ENCODE measurements at regions of chr7 and their contacts with region 1.

Region 1: GRCh38 chr7:117715784-117716445 is 157.3 kb downstream of the CTTNBP2 start:
- DNase-seq: peak; percentile 75
- ATAC-seq: peak; percentile 94
- H3K4me3 ChIP-seq: no peak overlapping the region
- H3K27ac ChIP-seq: no peak overlapping the region
- H3K4me1 ChIP-seq: no peaks in the 10 kb centered on the region
- H3K27me3 ChIP-seq: no peaks in the 10 kb centered on the region
- CTCF ChIP-seq: peak; percentile 76
- POLR2A ChIP-seq: no peak
- RAD21 ChIP-seq: peak; percentile 91

Region 2: GRCh38 chr7:117127585-117128168 is 588.2 kb before region 1 on chr7:
- CTCF ChIA-PET with region 1: no interaction called
- POLR2A ChIA-PET with region 1: no interaction called
- dilution Hi-C with region 1: no loop called
- in situ Hi-C with region 1: no loop called
- intact Hi-C with region 1: loop called (anchors 5 kb)
- DNase-seq: peak; percentile 72
- ATAC-seq: no peak
- H3K4me3 ChIP-seq: no peak overlapping the region
- H3K27ac ChIP-seq: no peak overlapping the region
- H3K4me1 ChIP-seq: peaks cover 12% of the 10 kb centered on the region
- H3K27me3 ChIP-seq: no peaks in the 10 kb centered on the region
- CTCF ChIP-seq: peak; percentile 75
- POLR2A ChIP-seq: no peak
- RAD21 ChIP-seq: peak; percentile 59

Region 3: GRCh38 chr7:117312598-117313580 is 403.0 kb before region 1 on chr7:
- CTCF ChIA-PET with region 1: no interaction called
- POLR2A ChIA-PET with region 1: no interaction called
- dilution Hi-C with region 1: no loop called
- in situ Hi-C with region 1: no loop called
- intact Hi-C with region 1: loop called (anchors 10 kb)
- DNase-seq: peak; percentile 13
- ATAC-seq: peak; percentile 72
- H3K4me3 ChIP-seq: no peak overlapping the region
- H3K27ac ChIP-seq: peak overlapping the region; percentile 62; the same call in 1 of the 2 replicates
- H3K4me1 ChIP-seq: peaks cover 2% of the 10 kb centered on the region; the same call in 1 of the 2 replicates
- H3K27me3 ChIP-seq: no peaks in the 10 kb centered on the region
- CTCF ChIP-seq: peak; percentile 48
- POLR2A ChIP-seq: no peak
- RAD21 ChIP-seq: peak; percentile 47

Region 4: DNA sequence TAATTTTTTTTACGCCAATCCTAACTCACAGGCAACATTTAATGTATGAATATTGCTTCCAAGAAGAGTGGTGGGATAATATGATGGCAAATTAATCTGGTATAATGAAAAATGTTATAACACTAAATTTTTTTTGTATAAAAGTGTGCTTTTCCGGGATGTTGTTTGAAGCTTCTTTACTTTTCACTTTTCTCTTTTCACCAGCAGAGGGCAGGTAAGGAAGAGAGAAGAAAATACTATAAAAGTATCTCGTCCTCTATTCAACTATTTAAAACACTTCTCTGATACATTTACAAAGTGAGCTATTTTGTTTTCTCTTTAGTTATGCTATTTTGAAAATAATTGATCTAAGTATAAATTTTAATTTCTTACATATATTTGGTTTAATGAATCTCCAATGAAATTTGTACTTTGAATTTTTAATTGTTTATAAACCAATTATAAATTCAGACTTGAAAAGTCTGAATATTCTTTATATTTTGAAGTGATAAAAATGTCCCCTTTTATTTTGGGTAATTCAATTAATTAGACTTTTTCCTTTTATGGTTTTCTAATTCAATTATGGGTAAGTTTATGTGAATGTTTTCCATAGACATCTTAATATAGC is 256.8 kb before region 1 on chr7:
- CTCF ChIA-PET with region 1: interaction called, 20 read pairs
- POLR2A ChIA-PET with region 1: no interaction called
- dilution Hi-C with region 1: no loop called
- in situ Hi-C with region 1: loop called (anchors 10 kb)
- intact Hi-C with region 1: loop called (anchors 1 kb)
- DNase-seq: peak; percentile 44
- ATAC-seq: peak; percentile 64; the same call in 1 of the 2 replicates
- H3K4me3 ChIP-seq: no peak overlapping the region
- H3K27ac ChIP-seq: no peak overlapping the region
- H3K4me1 ChIP-seq: no peaks in the 10 kb centered on the region
- H3K27me3 ChIP-seq: no peaks in the 10 kb centered on the region
- CTCF ChIP-seq: peak; percentile 73
- POLR2A ChIP-seq: no peak
- RAD21 ChIP-seq: peak; percentile 61

Region 5: GRCh38 chr7:117588345-117588794 is 127.5 kb before region 1 on chr7:
- CTCF ChIA-PET with region 1: no interaction called
- POLR2A ChIA-PET with region 1: no interaction called
- dilution Hi-C with region 1: no loop called
- in situ Hi-C with region 1: no loop called
- intact Hi-C with region 1: loop called (anchors 5 kb)
- DNase-seq: peak; percentile 89
- ATAC-seq: peak; percentile 77
- H3K4me3 ChIP-seq: no peak overlapping the region
- H3K27ac ChIP-seq: no peak overlapping the region
- H3K4me1 ChIP-seq: no peaks in the 10 kb centered on the region
- H3K27me3 ChIP-seq: no peaks in the 10 kb centered on the region
- CTCF ChIP-seq: no peak
- POLR2A ChIP-seq: no peak
- RAD21 ChIP-seq: no peak

Region 6: DNA sequence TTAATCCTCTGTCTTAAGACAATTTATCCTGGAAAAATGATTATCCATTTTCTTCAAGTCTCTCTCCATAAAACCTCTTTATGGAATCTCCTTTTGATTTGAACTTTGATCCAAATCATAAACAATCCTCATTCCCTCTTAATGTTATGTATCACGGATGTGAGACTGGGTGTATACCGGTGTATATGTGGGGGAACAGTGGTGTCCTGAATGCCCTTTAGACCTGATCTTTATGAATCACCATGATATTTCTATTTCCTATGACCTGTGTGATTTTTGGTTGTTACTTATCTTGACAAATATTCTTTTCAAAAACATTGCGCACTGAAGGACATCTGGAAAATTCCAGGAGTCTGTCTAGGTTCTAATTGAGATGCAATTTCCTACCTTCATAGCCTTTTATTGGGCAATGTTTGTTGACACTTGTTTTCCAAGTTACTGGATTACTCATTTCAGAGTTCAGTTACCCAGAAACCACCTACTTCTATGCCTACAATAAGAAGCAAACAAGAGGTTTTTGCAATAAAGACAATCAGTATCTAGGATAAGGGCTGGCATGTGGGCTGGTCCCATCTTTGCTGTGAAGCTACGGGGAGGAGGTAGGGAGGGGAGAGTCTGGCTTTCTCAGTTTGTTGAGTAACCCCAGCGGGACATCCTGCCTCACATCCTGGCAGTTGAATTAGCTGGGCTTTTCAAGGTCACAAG is 33.1 kb before region 1 on chr7:
- CTCF ChIA-PET with region 1: no interaction called
- POLR2A ChIA-PET with region 1: no interaction called
- dilution Hi-C with region 1: no loop called
- in situ Hi-C with region 1: no loop called
- intact Hi-C with region 1: no loop called
- DNase-seq: peak; percentile 19
- ATAC-seq: no peak
- H3K4me3 ChIP-seq: no peak overlapping the region
- H3K27ac ChIP-seq: no peak overlapping the region
- H3K4me1 ChIP-seq: no peaks in the 10 kb centered on the region
- H3K27me3 ChIP-seq: peaks cover 14% of the 10 kb centered on the region
- CTCF ChIP-seq: no peak
- POLR2A ChIP-seq: no peak
- RAD21 ChIP-seq: no peak

Region 7: DNA sequence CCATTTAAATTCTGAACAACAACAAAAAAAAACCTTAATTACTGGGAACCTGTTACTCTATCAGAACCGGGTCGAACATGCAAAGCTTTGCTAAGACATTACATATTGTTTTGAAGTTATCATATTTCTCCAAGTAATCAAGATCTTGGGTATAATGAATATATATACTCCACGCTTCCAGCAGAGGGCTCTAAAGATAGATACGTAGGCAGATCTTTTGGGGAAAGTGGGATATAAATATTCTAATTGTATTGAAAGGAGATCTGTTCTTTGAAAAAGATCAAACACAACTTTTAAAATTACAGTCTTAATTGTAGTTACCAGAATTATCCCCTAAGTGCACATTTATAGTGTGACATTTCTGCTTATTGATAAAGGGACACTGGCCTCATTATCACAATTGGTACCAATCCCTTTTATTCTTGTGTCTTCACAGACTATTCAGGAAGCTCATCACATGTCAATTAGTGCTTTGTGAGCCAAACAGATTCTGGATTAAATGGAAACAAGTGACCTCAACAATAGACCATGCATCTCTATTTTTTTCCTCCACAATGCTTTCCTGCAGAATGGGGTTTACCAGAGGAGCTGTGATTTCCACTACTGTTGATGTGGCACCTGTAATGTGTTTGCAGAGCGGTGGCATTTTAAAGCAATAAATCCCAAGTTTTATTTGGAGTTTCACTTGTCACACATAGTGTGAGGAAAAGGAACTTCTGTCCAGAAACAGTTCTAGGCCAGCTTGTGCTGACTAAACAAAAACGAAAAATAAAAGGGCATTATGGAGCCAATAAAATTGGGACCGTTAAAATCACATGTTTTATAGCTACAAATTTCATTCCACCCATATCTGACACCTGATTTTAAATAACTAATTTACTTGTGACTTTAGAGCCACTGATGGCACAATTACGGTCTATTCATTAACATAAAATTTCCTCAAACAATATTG is 35.0 kb after region 1 on chr7:
- CTCF ChIA-PET with region 1: no interaction called
- POLR2A ChIA-PET with region 1: no interaction called
- dilution Hi-C with region 1: no loop called
- in situ Hi-C with region 1: no loop called
- intact Hi-C with region 1: no loop called
- DNase-seq: peak; percentile 50
- ATAC-seq: peak; percentile 75
- H3K4me3 ChIP-seq: no peak overlapping the region
- H3K27ac ChIP-seq: no peak overlapping the region
- H3K4me1 ChIP-seq: 0 out of 2 replicates have a peak, but pooled peaks cover 2% of the 10 kb centered on the region
- H3K27me3 ChIP-seq: no peaks in the 10 kb centered on the region
- CTCF ChIP-seq: peak; percentile 70
- POLR2A ChIP-seq: no peak
- RAD21 ChIP-seq: peak; percentile 77

Measured in IMR-90 (cell line).